ENCODE measurements at regions of chr7 and their contacts with region 1.

Region 1: DNA sequence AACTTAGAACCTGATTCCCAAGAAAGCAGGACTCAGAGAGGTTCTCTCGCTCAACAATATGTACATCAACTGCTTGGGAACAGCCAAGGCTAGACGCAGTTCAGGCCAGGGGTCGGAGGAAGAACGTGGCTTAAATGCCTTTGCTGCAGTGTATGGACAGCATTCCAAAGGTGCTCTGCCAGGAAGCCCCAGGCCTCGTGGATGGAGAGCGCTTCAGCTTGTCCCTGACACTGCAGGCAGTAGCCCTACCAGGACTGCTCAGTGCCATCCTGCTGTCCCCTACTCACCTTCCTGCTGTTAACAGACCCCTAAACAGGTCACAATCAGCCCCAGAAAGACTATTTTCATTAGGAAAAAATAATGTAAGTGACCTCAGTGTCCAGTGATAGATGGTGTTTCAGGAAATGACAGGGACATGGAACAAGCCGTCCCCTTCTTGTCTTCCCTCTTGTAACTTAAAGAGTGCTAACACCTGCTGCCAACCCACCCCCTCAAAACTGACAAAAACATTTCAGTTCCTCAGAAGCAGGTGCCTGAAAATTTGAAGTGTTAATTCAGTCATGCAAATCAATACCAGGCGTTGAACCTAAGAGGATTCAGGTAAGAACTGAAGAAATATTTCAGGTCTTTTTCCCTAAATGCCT is 16.5 kb downstream of the CREB3L2 start:
- DNase-seq: peak; percentile 90
- H3K4me3 ChIP-seq: peak overlapping the region; percentile 52
- H3K27ac ChIP-seq: peak overlapping the region; percentile 100
- H3K4me1 ChIP-seq: peaks cover 92% of the 10 kb centered on the region
- CTCF ChIP-seq: no peak

Region 2: GRCh38 chr7:136359333-136359903 is 1626.0 kb before region 1 on chr7:
- CTCF ChIA-PET with region 1: no interaction called
- POLR2A ChIA-PET with region 1: no interaction called
- intact Hi-C with region 1: loop called (anchors 5 kb)
- DNase-seq: peak; percentile 95
- H3K4me3 ChIP-seq: peak overlapping the region; percentile 49
- H3K27ac ChIP-seq: peak overlapping the region; percentile 100
- H3K4me1 ChIP-seq: peaks cover 79% of the 10 kb centered on the region
- CTCF ChIP-seq: 0 out of 2 replicates have a peak, but pooled peaks have one; percentile 25

Region 3: GRCh38 chr7:137958470-137959431 is 26.6 kb before region 1 on chr7:
- CTCF ChIA-PET with region 1: no interaction called
- POLR2A ChIA-PET with region 1: no interaction called
- intact Hi-C with region 1: no loop called
- DNase-seq: no peak
- H3K4me3 ChIP-seq: no peak overlapping the region
- H3K27ac ChIP-seq: no peak overlapping the region
- H3K4me1 ChIP-seq: peaks cover 14% of the 10 kb centered on the region
- CTCF ChIP-seq: no peak

Region 4: GRCh38 chr7:137975221-137975620 is 10.2 kb before region 1 on chr7:
- CTCF ChIA-PET with region 1: interaction called, 3 read pairs
- POLR2A ChIA-PET with region 1: interaction called, 11 read pairs
- intact Hi-C with region 1: no loop called
- DNase-seq: no peak
- H3K4me3 ChIP-seq: no peak overlapping the region
- H3K27ac ChIP-seq: no peak overlapping the region
- H3K4me1 ChIP-seq: peaks cover under 1% of the 10 kb centered on the region
- CTCF ChIP-seq: no peak

Region 5: GRCh38 chr7:138002096-138002827 is 16.9 kb after region 1 on chr7:
- CTCF ChIA-PET with region 1: interaction called, 8 read pairs
- POLR2A ChIA-PET with region 1: interaction called, 65 read pairs
- intact Hi-C with region 1: loop called (anchors 1 kb)
- DNase-seq: peak; percentile 99
- H3K4me3 ChIP-seq: peak overlapping the region; percentile 80
- H3K27ac ChIP-seq: no peak overlapping the region
- H3K4me1 ChIP-seq: peaks cover 33% of the 10 kb centered on the region
- CTCF ChIP-seq: peak; percentile 96

Region 6: GRCh38 chr7:139109188-139109982 is 1124.0 kb after region 1 on chr7 and contains the start of gene ZC3HAV1:
- CTCF ChIA-PET with region 1: no interaction called
- POLR2A ChIA-PET with region 1: no interaction called
- intact Hi-C with region 1: loop called (anchors 5 kb)
- DNase-seq: peak; percentile 86
- H3K4me3 ChIP-seq: peak within 1 kb of the TSS; percentile 100
- H3K27ac ChIP-seq: peak within 1 kb of the TSS; percentile 83
- H3K4me1 ChIP-seq: peaks cover 30% of the 10 kb centered on the region
- CTCF ChIP-seq: no peak
- total RNA-seq, gene ZC3HAV1: 44.2 and 47.4 TPM in 2 replicates

Measured in OCI-LY7 (cell line).